ENCODE measurements at regions of chr17 and their contacts with region 1.

Region 1: DNA sequence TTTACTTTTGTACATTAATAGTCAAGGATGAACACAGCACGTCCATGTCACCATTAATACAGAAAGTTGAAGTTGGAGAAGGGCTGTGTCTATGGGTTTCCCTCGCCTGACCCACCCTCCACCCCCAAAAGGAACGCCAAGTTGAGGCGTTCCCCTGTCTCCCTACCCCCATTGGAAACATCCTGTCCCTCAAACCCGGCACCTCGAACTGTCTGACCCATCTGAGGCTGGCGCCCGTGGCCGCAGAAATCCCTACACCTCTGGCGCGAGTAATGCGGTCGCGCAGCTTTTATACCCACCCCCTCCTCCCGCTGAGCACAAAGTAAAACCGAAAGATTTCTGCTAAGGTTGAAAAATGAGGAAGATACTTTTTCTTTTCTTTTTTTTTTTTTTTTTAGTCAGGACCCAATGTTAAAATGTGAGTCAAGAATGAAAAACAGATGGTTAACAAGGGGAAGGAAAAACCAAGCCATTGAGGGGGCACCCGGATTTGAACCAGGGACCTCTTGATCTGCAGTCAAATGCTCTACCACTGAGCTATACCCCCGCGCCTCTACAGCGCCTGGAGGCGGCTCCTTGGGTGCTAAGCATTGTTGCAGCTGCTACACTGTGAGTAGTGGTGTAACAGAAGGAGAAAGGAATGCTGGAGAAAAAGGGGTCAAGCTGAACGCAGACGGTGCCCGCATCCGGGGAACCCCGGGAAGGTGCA is 887 bp upstream of the LASP1 start:
- DNase-seq: peak; percentile 84
- H3K4me3 ChIP-seq: peak overlapping the region; percentile 66 to 84 (median 73)
- H3K27ac ChIP-seq: peak overlapping the region; percentile 26
- H3K4me1 ChIP-seq: peaks cover 49% of the 10 kb centered on the region
- H3K27me3 ChIP-seq: no peaks in the 10 kb centered on the region
- CTCF ChIP-seq: peak; percentile 7 to 49

Region 2: GRCh38 chr17:38571833-38572668 is 296.9 kb before region 1 on chr17:
- CTCF ChIA-PET with region 1: no interaction called
- dilution Hi-C with region 1: no loop called
- in situ Hi-C with region 1: no loop called
- intact Hi-C with region 1: no loop called
- DNase-seq: no peak
- H3K4me3 ChIP-seq: no peak overlapping the region
- H3K27ac ChIP-seq: no peak overlapping the region
- H3K4me1 ChIP-seq: peaks cover 21% of the 10 kb centered on the region
- H3K27me3 ChIP-seq: peaks cover 11% of the 10 kb centered on the region
- CTCF ChIP-seq: no peak

Region 3: GRCh38 chr17:38702166-38702899 is 166.6 kb before region 1 on chr17:
- CTCF ChIA-PET with region 1: no interaction called
- dilution Hi-C with region 1: no loop called
- in situ Hi-C with region 1: no loop called
- intact Hi-C with region 1: no loop called
- DNase-seq: peak; percentile 88
- H3K4me3 ChIP-seq: peak overlapping the region; percentile 62 to 76 (median 71)
- H3K27ac ChIP-seq: peak overlapping the region; percentile 62
- H3K4me1 ChIP-seq: peaks cover 29% of the 10 kb centered on the region
- H3K27me3 ChIP-seq: no peaks in the 10 kb centered on the region
- CTCF ChIP-seq: no peak

Region 4: DNA sequence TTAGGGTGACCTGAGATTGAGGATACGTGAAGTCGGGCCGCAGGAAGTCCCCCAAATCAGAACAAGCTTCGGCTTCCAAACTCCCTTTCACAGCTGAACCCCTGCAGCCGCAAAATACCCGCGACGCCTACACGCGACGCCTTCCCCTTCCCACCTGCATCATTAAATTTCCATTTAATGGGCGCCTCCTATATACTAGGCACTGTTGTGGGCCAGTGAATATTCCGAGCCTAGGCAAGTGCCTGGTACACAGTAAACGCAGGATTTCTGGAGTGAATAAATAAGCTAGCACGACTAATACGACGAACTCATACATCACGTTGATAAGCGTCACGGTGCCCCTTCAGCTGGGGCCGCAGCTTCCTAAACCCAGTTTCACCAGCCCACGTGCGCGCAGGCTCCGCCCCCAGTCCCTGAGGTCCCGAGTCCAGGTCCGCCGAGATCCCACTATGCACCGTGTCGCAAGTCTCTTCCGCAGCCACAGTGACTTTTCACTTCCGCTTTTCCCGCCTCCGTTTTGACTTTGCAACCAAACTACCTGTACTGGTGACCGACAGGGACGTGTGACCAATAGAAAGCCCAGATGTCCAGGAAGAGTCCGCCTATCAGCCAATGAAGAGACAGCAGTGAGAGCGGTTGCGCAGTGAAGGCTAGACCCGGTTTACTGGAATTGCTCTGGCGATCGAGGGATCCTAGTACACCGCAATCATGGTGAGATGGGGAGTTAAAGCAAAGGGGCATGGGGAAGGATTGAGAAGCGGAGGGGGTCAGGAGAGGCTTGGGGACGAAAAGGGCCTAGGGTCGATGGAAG is 116.6 kb before region 1 on chr17 and contains the start of gene PSMB3:
- CTCF ChIA-PET with region 1: no interaction called
- dilution Hi-C with region 1: no loop called
- in situ Hi-C with region 1: no loop called
- intact Hi-C with region 1: loop called (anchors 1 kb)
- DNase-seq: peak; percentile 99
- H3K4me3 ChIP-seq: peak within 1 kb of the TSS; percentile 81 to 96 (median 94)
- H3K27ac ChIP-seq: peak within 1 kb of the TSS; percentile 78
- H3K4me1 ChIP-seq: peaks cover 33% of the 10 kb centered on the region
- H3K27me3 ChIP-seq: no peaks in the 10 kb centered on the region
- CTCF ChIP-seq: no peak
- total RNA-seq, gene PSMB3: 150 to 218 TPM

Region 5: GRCh38 chr17:38824899-38825761 is 43.8 kb before region 1 on chr17 and contains the start of gene CWC25:
- CTCF ChIA-PET with region 1: no interaction called
- dilution Hi-C with region 1: no loop called
- in situ Hi-C with region 1: no loop called
- intact Hi-C with region 1: loop called (anchors 1 kb)
- DNase-seq: peak; percentile 94
- H3K4me3 ChIP-seq: peak within 1 kb of the TSS; percentile 59 to 90 (median 87)
- H3K27ac ChIP-seq: peak within 1 kb of the TSS; percentile 98
- H3K4me1 ChIP-seq: peaks cover 7% of the 10 kb centered on the region
- H3K27me3 ChIP-seq: no peaks in the 10 kb centered on the region
- CTCF ChIP-seq: no peak
- total RNA-seq, gene CWC25: 9.2 to 18.0 TPM

Region 6: GRCh38 chr17:38879878-38880682 is 11.1 kb after region 1 on chr17:
- CTCF ChIA-PET with region 1: no interaction called
- dilution Hi-C with region 1: no loop called
- in situ Hi-C with region 1: no loop called
- intact Hi-C with region 1: loop called (anchors 1 kb)
- DNase-seq: peak; percentile 77
- H3K4me3 ChIP-seq: peak overlapping the region in 1 of 3 experiments; percentile 13
- H3K27ac ChIP-seq: peak overlapping the region; percentile 25
- H3K4me1 ChIP-seq: peaks cover 76% of the 10 kb centered on the region
- H3K27me3 ChIP-seq: no peaks in the 10 kb centered on the region
- CTCF ChIP-seq: no peak

Region 7: DNA sequence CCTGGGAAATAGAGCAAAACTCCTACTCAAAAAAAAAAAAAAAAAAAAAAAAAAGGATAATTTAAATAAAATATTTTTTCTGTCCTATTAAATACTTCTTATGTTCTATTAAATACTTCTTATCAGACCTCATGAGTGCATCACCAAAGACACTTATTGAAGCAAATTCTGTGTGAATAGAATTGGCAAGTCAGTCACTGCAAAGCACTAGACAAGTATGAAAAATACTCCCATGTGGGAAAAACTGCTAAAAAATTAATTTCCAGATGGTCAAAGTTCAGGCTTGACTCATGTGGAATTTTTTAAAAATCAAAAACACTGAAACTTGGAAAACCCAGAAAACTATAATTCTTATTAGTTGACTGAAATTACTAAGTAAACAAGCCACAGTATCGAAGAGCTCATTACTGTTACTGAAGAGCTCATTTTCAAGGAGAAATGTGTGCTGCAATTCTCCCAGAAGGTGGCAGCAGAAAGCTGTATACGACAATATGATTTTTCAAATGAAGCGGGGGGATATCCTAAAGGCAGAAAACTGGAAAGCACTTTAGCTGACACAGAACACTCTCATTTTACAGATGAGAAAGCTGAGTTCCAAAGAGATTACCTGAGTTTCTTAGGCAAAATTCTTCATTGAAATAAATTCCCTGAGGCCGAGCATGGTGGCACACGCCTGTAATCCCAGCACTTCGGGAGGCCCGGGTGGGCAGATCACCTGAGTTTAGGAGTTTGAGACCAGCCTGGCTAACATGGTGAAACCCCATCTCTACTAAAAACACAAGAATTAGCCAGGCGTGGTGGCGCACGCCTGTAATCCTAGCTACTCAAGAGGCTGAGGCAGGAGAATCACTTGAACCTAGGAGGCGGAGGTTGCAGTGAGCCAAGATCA is 114.1 kb after region 1 on chr17:
- CTCF ChIA-PET with region 1: interaction called, 4 read pairs
- dilution Hi-C with region 1: no loop called
- in situ Hi-C with region 1: no loop called
- intact Hi-C with region 1: loop called (anchors 2 kb)
- DNase-seq: peak; percentile 38
- H3K4me3 ChIP-seq: no peak overlapping the region
- H3K27ac ChIP-seq: no peak overlapping the region
- H3K4me1 ChIP-seq: no peaks in the 10 kb centered on the region
- H3K27me3 ChIP-seq: no peaks in the 10 kb centered on the region
- CTCF ChIP-seq: peak; percentile 77 to 85

Region 8: GRCh38 chr17:39011907-39012468 is 143.0 kb after region 1 on chr17:
- CTCF ChIA-PET with region 1: no interaction called
- dilution Hi-C with region 1: no loop called
- in situ Hi-C with region 1: no loop called
- intact Hi-C with region 1: no loop called
- DNase-seq: no peak
- H3K4me3 ChIP-seq: no peak overlapping the region
- H3K27ac ChIP-seq: no peak overlapping the region
- H3K4me1 ChIP-seq: peaks cover 5% of the 10 kb centered on the region
- H3K27me3 ChIP-seq: peaks cover 1% of the 10 kb centered on the region
- CTCF ChIP-seq: no peak

Measured in mammary epithelial cell (primary cell).